ENCODE measurements at regions of chr22 and their contacts with region 1.

Region 1: GRCh38 chr22:50111056-50111455 is 21.2 kb downstream of the MOV10L1 start:
- DNase-seq: no peak
- H3K4me3 ChIP-seq: no peak overlapping the region
- H3K27ac ChIP-seq: no peak overlapping the region
- H3K4me1 ChIP-seq: no peaks in the 10 kb centered on the region
- H3K27me3 ChIP-seq: peaks cover 69% of the 10 kb centered on the region
- CTCF ChIP-seq: no peak

Region 2: GRCh38 chr22:50121202-50121740 is 10.2 kb after region 1 on chr22:
- CTCF ChIA-PET with region 1: interaction called, 12 read pairs
- POLR2A ChIA-PET with region 1: no interaction called
- intact Hi-C with region 1: no loop called
- DNase-seq: no peak
- H3K4me3 ChIP-seq: no peak overlapping the region
- H3K27ac ChIP-seq: no peak overlapping the region
- H3K4me1 ChIP-seq: peaks cover 7% of the 10 kb centered on the region; the same call in 1 of the 2 replicates
- H3K27me3 ChIP-seq: peaks cover 90% of the 10 kb centered on the region
- CTCF ChIP-seq: no peak

Measured in PC-9 (cell line).